Right ventricle myocardium superior (tissue), 1 donor: ENCODE measurements at regions of chr20 and their contacts with region 1.

Region 1: GRCh38 chr20:46022411-46023147 is 6.4 kb upstream of the SLC12A5 start:
- DNase-seq: peak; percentile 80
- ATAC-seq: peak; percentile 79

Region 2: DNA sequence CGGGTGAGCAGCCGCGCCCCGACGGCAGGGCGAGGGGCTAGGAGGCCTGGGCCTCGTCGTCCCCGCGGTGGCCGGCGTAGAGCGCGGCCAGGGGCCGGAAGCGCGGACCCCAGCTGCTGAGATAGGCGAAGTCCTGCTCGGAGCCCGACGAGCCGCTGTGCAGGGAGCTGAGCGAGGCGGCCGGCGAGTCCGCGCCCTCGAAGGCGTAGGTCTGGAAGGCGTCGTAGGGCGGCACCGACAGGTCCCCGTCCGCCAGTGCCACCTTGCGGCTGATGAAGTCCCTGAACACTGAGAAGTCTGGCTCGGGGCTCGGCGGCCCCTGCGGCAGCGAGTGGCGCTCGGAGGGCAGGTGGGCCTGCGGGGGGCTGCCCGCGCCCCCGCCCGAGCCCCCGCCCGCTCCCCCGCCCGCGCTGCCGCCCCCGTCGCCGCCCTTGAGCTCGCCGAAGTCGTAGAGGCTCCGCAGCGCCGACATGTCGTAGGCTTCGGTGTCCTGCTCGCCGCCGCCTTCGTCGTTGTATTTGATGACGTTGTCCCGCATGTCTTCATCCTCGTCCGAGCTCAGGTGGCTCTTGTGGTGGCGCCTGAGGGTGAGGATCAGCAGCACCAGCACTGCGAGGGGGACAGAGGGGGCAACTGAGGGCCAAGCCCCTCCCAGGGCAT is 152.0 kb after region 1 on chr20:
- intact Hi-C with region 1: loop called (anchors 10 kb)
- DNase-seq: peak; percentile 83
- ATAC-seq: peak; percentile 88

Region 3: GRCh38 chr20:46349035-46349741 is 326.6 kb after region 1 on chr20:
- intact Hi-C with region 1: loop called (anchors 5 kb)
- DNase-seq: peak; percentile 79
- ATAC-seq: peak; percentile 89